MCF 10A (cell line): ENCODE measurements at regions of chr11 and their contacts with region 1.

Region 1: GRCh38 chr11:20609727-20610707 is 10.6 kb downstream of the SLC6A5 start:
- DNase-seq: peak; percentile 82
- H3K4me3 Mint-ChIP-seq: peak overlapping the region; percentile 56
- H3K27ac Mint-ChIP-seq: no peak overlapping the region
- H3K4me1 Mint-ChIP-seq: peaks cover 7% of the 10 kb centered on the region
- H3K27me3 Mint-ChIP-seq: peaks cover 75% of the 10 kb centered on the region
- CTCF ChIP-seq: peak; percentile 95

Region 2: DNA sequence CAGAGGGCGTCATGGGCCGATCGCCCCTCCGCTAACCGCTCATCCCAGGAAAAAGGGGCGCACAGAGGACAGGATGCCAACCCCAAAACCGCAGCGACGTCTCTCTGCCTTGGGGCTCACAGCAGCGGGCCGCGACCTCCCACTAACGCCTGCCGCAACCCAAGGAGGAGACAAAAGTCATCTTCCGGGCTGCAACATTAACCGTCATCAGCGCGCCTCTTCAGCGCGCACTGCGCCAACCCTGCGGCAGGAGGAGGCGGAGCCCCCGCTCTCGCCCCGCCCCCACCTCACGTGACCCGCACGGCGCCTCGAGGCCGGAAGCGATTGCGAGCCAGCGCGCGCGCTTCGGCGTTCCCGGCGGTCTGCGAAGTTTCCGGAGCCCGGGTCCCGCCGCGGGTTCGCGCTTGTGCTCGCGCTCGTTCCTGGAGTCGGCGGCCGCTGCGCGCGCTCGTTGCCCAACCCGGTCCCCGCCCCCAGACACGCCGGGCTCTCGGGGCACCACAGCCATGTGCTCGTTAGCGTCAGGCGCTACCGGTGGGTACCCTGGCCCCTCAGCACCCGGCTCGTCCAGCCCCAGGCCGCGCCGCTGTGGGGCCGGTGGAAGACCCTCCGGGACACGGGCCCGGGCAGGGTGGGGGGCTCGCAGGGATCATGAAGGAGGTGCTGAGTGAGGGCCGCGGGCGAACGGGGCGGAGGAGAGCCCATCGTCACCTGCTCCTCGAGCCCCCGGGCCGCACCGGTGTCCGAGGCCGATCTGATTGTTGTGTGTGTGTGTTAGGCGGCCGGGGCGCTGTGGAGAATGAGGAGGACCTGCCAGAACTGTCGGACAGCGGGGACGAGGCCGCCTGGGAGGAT is 222.5 kb before region 1 on chr11 and contains the start of gene PRMT3:
- CTCF ChIA-PET with region 1: interaction called, 53 read pairs
- POLR2A ChIA-PET with region 1: interaction called, 4 read pairs
- intact Hi-C with region 1: loop called (anchors 2 kb)
- DNase-seq: peak; percentile 94
- H3K4me3 Mint-ChIP-seq: peak within 1 kb of the TSS; percentile 87
- H3K27ac Mint-ChIP-seq: peak within 1 kb of the TSS; percentile 97
- H3K4me1 Mint-ChIP-seq: no peaks in the 10 kb centered on the region
- H3K27me3 Mint-ChIP-seq: no peaks in the 10 kb centered on the region
- CTCF ChIP-seq: peak; percentile 96
- total RNA-seq, gene PRMT3: 45.1 and 60.1 TPM in 2 replicates

Region 3: GRCh38 chr11:20407344-20407743 is 202.7 kb before region 1 on chr11:
- CTCF ChIA-PET with region 1: interaction called, 121 read pairs
- POLR2A ChIA-PET with region 1: no interaction called
- intact Hi-C with region 1: no loop called
- DNase-seq: no peak
- H3K4me3 Mint-ChIP-seq: no peak overlapping the region
- H3K27ac Mint-ChIP-seq: no peak overlapping the region
- H3K4me1 Mint-ChIP-seq: no peaks in the 10 kb centered on the region
- H3K27me3 Mint-ChIP-seq: no peaks in the 10 kb centered on the region
- CTCF ChIP-seq: no peak

Region 4: GRCh38 chr11:20443596-20443995 is 166.4 kb before region 1 on chr11:
- CTCF ChIA-PET with region 1: interaction called, 23 read pairs
- POLR2A ChIA-PET with region 1: no interaction called
- intact Hi-C with region 1: no loop called
- DNase-seq: peak; percentile 32
- H3K4me3 Mint-ChIP-seq: no peak overlapping the region
- H3K27ac Mint-ChIP-seq: peak overlapping the region; percentile 28
- H3K4me1 Mint-ChIP-seq: peaks cover 6% of the 10 kb centered on the region
- H3K27me3 Mint-ChIP-seq: no peaks in the 10 kb centered on the region
- CTCF ChIP-seq: peak; percentile 31

Region 5: DNA sequence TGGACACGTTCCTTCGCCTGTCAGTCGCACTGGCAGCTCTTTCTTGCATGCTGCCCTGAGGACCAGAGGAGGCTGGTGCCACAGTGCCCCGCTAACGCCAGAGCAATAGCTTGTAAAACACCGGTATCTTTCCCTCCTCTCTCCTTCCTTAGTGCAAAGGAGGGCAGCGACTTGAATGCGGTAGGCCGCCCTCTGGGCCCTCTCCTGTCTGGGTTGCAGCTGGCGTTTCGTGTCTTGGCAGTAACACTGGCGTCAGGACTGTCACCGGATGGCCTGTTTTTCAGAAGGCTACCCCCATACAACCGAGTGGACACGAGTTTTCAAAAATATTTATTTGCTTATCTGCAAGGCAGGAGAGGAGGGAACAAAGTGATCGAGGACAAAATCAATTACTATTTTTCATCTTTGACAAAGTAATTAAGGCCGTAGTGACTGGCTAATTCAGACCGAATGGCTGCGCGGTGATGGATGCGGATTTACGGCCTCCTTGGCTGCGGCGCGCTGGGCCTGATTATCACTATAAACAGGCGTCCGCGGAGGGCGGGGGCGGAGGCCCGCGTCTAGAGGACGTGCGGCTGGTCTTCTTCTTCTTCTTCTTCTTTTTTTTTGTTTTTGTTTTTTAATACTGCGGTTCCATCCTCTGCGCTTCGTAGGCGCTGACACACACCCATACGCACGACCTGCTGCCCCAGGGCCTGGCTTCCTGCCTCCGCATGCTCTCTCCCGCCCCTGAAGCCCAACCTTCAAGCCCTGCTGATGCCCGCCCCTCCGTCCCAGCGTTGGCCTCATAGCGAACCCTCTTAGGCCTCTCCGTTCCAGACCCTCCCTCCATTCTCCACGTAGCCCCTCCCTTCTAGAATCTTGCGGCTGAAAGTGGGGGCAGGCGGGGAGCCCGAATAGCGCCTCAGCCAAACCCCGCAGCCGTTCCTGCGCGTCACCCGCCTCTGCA is 13.5 kb before region 1 on chr11:
- CTCF ChIA-PET with region 1: interaction called, 25 read pairs
- POLR2A ChIA-PET with region 1: no interaction called
- intact Hi-C with region 1: no loop called
- DNase-seq: no peak
- H3K4me3 Mint-ChIP-seq: no peak overlapping the region
- H3K27ac Mint-ChIP-seq: no peak overlapping the region
- H3K4me1 Mint-ChIP-seq: peaks cover 6% of the 10 kb centered on the region
- H3K27me3 Mint-ChIP-seq: peaks cover 89% of the 10 kb centered on the region
- CTCF ChIP-seq: no peak

Region 6: GRCh38 chr11:20712912-20713311 is 102.9 kb after region 1 on chr11:
- CTCF ChIA-PET with region 1: no interaction called
- POLR2A ChIA-PET with region 1: no interaction called
- intact Hi-C with region 1: no loop called
- DNase-seq: no peak
- H3K4me3 Mint-ChIP-seq: no peak overlapping the region
- H3K27ac Mint-ChIP-seq: no peak overlapping the region
- H3K4me1 Mint-ChIP-seq: no peaks in the 10 kb centered on the region
- H3K27me3 Mint-ChIP-seq: no peaks in the 10 kb centered on the region
- CTCF ChIP-seq: no peak